Calu3 (cell line): ENCODE measurements at regions of chr22 and their contacts with region 1.

Region 1: DNA sequence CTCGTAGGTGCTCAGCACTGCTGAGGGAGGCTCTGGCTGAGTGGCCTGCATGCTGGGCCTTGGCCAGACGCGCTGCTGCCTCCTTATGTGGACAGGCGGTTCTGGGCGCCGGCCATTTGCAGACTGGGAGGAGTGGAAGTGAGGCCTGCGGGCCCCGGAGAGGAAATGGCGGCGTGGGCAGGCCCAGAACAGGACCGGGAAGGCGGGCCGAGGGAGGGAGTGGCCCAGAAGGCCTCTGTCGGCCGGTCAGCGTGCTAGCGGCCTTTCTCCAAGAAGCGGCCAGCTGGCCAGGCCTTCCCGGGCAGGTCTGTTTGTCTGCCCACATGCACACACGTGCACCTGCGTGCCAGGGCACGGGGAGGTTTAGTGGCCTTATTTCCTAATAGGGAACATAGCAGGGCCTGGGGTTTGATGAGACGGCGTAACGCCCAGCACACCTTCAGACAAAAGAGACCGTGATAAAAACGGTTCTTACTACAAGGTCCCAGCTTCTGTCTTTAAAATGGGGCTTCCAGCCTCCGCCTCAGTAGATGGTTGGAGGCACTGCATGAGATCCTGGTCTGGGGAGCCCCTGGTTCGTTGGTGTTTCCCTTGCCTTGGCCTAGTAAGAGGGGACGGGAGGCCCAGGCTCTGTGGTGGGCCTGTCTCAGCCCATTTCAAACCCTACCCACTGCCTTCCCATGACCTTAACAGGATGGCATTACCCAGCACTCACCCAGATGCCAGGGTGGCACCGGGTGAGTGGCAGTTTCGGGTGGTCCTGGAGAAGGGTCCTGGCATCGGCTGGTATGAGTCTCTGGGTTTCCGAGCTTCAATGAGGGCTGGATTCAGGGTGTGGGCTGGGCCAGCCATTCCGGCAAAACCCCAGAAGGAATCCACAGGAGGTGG is 65.1 kb upstream of the PPARA start:
- DNase-seq: peak; percentile 81
- H3K4me3 Mint-ChIP-seq: peak overlapping the region; percentile 83
- H3K27ac Mint-ChIP-seq: peak overlapping the region; percentile 98
- H3K4me1 Mint-ChIP-seq: peaks cover 46% of the 10 kb centered on the region
- H3K27me3 Mint-ChIP-seq: no peaks in the 10 kb centered on the region
- CTCF ChIP-seq: no peak

Region 2: DNA sequence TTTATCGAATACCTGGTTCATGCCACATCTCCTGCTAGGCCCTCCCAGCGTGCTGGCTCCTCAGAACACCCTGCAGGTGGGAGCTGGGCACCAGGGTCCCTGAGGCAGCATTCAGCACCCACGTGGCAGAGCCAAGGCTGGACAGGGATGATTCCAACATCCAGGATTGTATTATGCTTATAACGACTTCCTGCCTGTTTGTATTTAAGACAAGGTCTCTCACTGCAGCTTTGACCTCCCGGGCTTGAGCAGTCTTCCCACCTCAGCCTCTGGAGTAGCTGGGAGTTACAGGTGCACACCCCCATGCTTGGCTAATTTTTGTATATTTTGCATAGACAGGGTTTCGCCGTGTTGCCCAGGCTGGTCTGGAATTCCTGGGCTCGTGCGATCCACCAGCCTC is 43.5 kb before region 1 on chr22:
- CTCF ChIA-PET with region 1: no interaction called
- intact Hi-C with region 1: no loop called
- DNase-seq: no peak
- H3K4me3 Mint-ChIP-seq: no peak overlapping the region
- H3K27ac Mint-ChIP-seq: no peak overlapping the region
- H3K4me1 Mint-ChIP-seq: no peaks in the 10 kb centered on the region
- H3K27me3 Mint-ChIP-seq: no peaks in the 10 kb centered on the region
- CTCF ChIP-seq: no peak

Region 3: DNA sequence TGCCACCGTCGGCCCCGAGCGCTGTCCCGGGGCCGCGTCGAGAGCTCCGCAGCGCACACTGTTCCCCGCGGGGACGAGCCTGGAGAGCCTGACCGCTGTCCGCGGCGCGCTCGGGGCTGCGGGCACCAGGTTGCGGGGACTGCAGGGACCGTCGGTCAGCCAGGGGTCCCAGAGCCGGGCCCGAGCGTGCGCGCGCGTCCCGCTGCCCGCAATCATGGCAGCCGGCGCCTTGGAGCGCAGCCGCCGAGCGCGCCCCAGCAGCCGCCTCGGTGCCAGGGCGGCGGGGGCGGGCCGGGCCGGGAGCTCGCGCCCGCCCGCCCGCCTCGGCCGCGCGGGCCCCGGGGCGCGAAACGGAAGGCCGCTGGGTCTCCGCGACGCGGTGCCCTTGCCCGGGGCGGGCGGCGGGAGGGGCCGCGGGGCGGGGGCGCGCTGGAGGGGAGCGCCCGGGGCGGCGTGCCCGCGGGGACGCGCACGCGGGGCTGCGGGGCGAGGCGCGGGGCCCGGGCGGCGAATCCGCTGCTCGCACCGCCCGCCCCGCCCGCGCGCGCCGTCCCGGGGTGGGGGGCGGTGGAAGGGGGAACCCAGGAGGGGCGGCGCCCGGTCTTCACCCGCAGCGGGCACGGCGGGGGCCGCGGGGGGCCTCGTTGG is 14.3 kb before region 1 on chr22:
- CTCF ChIA-PET with region 1: interaction called, 3 read pairs
- intact Hi-C with region 1: loop called (anchors 2 kb)
- DNase-seq: peak; percentile 85
- H3K4me3 Mint-ChIP-seq: peak overlapping the region; percentile 83
- H3K27ac Mint-ChIP-seq: peak overlapping the region; percentile 99
- H3K4me1 Mint-ChIP-seq: peaks cover 15% of the 10 kb centered on the region
- H3K27me3 Mint-ChIP-seq: no peaks in the 10 kb centered on the region
- CTCF ChIP-seq: no peak